IMR-90 (cell line): ENCODE measurements at regions of chr5 and their contacts with region 1.

Region 1: DNA sequence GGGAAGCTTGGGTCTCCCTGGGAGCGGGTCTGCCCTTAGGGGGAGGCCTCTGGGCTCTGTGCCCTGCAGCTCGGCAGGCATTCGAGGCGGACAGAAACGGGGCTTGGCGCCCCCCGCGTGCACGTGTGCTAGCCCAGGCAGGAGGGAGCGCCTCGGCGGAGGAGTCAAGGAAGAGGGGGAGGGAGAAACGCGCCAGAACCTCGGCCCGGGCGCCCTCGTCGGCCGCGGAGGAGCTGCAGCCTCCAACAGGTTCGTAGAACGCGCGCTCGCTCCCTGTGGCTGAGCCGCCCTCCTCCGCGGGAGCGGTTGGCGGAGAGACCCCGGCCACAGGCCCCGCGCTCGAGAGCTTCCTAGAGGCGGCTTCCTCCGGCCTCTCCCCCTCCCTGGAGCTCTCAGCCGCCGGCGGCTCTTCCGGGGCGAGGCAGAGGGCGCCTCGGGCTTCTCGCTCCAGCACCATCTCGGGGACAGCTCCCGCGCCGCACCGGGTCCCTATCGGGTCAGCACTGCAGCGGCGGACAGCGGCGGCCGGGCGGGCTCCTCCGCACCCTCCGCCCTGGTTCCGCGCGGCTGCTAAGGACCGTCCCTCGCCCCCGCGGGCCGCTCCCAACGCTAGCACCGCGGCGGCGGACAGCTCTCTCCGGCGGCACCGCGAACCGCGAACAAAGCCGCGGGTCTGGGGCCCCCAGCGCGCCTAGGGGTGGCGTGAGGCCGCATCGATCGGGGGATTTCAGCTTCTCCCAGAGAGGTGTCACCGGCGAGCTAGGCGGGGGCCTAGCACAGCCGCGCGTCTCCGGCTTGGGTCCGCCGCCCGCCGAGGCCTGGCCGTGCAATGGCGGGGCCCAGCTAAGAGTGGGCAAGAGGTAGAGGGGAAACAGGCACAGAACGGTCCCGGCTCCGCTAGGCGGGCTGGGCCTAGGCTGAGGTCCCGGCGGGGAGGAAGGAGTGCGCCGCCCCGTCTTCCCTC is 74.6 kb upstream of the CPLX2 start:
- DNase-seq: peak; percentile 74
- ATAC-seq: peak; percentile 100
- H3K4me3 ChIP-seq: no peak overlapping the region
- H3K27ac ChIP-seq: no peak overlapping the region
- H3K4me1 ChIP-seq: peaks cover 1% of the 10 kb centered on the region; the same call in 1 of the 2 replicates
- H3K27me3 ChIP-seq: peaks cover 6% of the 10 kb centered on the region; the same call in 1 of the 2 replicates
- CTCF ChIP-seq: no peak
- POLR2A ChIP-seq: no peak
- RAD21 ChIP-seq: no peak

Region 2: GRCh38 chr5:175809531-175810121 is 12.8 kb after region 1 on chr5:
- CTCF ChIA-PET with region 1: no interaction called
- POLR2A ChIA-PET with region 1: no interaction called
- dilution Hi-C with region 1: no loop called
- in situ Hi-C with region 1: no loop called
- intact Hi-C with region 1: loop called (anchors 1 kb)
- DNase-seq: peak; percentile 86
- ATAC-seq: peak; percentile 92
- H3K4me3 ChIP-seq: no peak overlapping the region
- H3K27ac ChIP-seq: no peak overlapping the region
- H3K4me1 ChIP-seq: peaks cover 8% of the 10 kb centered on the region; the same call in 1 of the 2 replicates
- H3K27me3 ChIP-seq: peaks cover 9% of the 10 kb centered on the region
- CTCF ChIP-seq: no peak
- POLR2A ChIP-seq: no peak
- RAD21 ChIP-seq: no peak